ENCODE measurements at regions of chrX and their contacts with region 1.

Region 1: DNA sequence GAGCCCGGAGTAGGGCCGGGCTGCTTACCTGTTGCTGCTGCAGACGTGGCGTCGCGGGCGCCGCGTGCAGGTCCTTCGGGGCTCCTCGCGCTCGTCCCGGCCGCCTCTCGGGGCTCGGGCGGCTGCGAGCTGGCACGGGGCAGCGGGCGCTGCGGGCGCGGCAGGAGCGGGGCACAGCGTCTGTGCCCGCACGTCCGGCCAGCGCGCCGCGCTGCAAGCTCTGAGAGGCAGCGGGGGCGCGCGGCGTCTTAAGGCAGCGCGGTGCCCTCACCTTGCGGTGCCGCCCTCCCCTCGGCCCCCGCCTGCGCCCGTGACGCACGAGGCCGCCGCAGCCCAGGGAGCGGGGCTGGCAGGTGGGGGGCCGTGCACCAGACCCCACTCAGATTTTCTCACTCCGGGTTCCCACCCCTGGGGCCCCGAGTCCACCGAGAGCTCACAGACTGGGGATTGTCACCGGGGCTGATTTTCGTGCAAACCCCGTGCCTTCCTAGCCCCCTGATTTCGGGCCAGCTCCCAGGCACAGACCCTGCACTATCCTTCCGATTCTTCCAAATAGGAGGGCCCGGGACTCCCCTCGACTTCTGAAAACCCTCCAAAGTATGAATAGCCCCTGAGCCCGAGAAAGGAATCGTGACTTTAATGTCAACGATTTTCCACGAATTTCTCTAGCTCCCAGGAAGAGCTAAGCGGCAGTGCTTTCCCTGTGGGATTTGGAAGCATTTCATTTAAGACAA is at the start of gene GPR101:
- DNase-seq: no peak
- ATAC-seq: no peak; the same call in 1 of the 2 replicates
- H3K4me3 Mint-ChIP-seq: peak within 1 kb of the TSS; percentile 59
- H3K27ac Mint-ChIP-seq: no peak within 1 kb of the TSS
- H3K4me1 Mint-ChIP-seq: peaks cover 15% of the 10 kb centered on the region
- H3K27me3 Mint-ChIP-seq: peaks cover 43% of the 10 kb centered on the region
- CTCF ChIP-seq: no peak
- total RNA-seq, gene GPR101: 0.16 TPM in 1 of 3 replicates, not detected in the others

Region 2: DNA sequence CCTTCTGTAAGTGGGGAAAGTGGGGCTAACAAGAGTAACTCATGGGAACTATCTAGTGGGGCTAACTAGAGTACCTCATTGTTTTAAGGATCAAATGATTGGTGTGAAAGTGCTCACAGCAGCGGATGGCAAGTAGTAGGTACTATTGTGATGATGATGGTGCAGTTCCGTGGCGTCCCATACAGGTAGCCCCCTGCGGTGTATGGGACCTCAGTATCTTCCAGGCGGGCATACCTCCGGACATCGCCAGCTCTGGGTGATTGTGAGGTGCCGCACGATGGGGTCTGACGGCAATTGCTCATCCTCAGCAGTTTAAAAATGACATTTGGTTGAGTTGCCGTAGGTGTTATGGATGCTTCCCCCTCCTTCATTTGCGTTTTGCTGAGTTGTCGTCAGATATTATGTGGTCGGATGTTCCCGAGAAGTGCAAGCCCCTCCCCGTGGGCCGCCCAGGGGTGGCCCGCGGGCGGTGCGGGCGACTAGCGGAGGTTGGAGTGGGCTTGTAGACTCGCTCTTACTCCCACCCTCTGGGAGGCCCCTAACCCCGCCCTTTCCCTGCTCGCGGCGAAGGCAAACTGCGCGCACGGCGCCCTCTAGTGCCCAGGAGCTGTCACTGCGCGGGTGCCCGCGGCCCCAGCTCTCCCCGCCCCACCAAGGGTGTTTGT is 18.2 kb after region 1 on chrX:
- CTCF ChIA-PET with region 1: interaction called, 14 read pairs
- POLR2A ChIA-PET with region 1: no interaction called
- DNase-seq: peak; percentile 79
- ATAC-seq: peak; percentile 94
- H3K4me3 Mint-ChIP-seq: peak overlapping the region; percentile 77
- H3K27ac Mint-ChIP-seq: no peak overlapping the region
- H3K4me1 Mint-ChIP-seq: peaks cover 7% of the 10 kb centered on the region; the same call in 1 of the 2 replicates
- H3K27me3 Mint-ChIP-seq: peaks cover 65% of the 10 kb centered on the region
- CTCF ChIP-seq: peak; percentile 68

Measured in WTC11 (cell line).